Activated T-helper 1 cell treated with anti-CD3 and anti-CD28 coated beads, Interleukin-12 subunit alpha, Interleukin-12 subunit beta, Interleukin-2, Interleukin-4 antibody, amounts not matched to agents 30 ng/mL and 10 ng/mL and 1 ng/mL, durations not matched to agents 14 hours and 24 hours and 36 hours (primary cell): ENCODE measurements at regions of chr3 and their contacts with region 1.

Region 1: DNA sequence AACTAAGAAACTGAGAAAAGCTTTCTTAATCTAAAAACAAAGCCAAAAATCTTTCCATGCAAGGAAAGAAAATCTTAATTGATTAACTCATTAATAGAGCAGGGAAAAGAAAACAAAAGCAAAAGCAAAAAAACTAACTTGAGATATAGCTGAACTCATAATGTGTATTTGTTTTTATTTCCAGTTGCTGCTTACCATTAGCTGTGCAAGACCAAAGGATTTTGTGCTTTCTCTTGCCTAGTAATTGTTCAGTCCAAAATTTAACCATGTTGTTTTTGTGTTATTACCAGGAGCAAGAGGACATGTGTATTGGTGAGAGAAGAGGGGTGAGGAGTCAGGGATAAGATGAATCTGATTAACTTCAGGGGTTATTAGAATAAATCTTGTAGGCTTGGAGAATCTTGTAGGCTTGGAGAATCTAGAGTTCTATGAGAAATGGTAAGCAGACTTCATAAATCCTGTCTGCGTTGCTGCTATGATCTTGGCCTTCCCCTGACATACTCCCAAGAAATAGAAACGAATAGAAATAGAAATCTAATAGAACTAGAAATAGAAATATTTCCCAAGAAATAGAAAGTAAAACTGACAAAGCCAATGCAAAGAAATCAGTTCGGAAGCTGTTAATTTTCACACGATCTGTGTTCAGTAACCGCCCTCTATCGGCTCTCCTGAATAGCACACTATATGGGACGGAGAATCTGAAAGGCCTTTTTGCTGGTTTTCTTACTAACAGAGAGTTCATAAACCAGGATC is 72.6 kb upstream of the TNFSF10 start:
- DNase-seq: peak; percentile 42
- H3K4me3 Mint-ChIP-seq: peak overlapping the region; percentile 84
- H3K27ac Mint-ChIP-seq: peak overlapping the region; percentile 88
- H3K4me1 Mint-ChIP-seq: peaks cover 69% of the 10 kb centered on the region
- H3K27me3 Mint-ChIP-seq: peaks cover 4% of the 10 kb centered on the region

Region 2: DNA sequence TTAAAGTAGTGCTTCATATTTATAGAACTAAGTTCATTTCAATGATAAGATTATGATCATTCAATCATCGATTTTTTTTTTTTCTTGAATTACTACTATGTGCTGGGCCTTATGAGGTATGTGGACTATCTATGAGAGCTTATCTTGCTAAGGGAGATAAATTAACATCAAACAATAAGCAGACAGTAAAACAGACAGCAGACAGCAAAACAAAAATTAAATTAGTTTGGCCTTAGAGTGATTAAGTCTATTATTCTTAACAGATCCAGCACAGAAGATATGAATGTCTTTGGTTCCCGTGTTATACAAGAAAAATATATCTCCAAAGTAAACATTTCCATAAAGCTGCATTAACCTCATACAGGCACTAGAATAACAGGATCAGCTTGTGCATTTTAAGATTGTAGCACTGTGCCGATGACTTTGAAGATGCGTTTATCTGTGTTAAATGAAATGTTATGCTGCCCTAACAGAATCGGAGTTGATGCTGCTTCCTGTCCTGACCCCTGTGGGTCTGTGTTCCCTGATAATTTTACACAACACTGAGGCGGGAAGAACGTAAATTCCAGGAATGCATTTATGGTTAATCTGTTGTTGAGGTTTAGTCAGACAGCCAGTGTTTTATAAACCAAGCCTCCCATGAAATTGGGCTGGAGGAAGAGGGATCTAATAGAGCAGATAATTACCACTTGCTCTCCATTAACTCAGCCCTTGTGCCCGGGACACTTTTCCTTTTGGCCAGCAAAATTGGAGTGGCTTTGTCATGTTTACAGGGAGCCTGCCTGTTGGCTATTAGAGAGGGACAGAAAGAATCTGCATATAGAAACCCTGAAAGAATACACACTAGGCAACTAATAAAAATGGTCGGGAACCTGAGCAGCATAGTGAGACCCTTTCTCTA is 228.4 kb before region 1 on chr3:
- intact Hi-C with region 1: no loop called
- DNase-seq: no peak
- H3K4me3 Mint-ChIP-seq: no peak overlapping the region
- H3K27ac Mint-ChIP-seq: no peak overlapping the region
- H3K4me1 Mint-ChIP-seq: no peaks in the 10 kb centered on the region
- H3K27me3 Mint-ChIP-seq: no peaks in the 10 kb centered on the region

Region 3: DNA sequence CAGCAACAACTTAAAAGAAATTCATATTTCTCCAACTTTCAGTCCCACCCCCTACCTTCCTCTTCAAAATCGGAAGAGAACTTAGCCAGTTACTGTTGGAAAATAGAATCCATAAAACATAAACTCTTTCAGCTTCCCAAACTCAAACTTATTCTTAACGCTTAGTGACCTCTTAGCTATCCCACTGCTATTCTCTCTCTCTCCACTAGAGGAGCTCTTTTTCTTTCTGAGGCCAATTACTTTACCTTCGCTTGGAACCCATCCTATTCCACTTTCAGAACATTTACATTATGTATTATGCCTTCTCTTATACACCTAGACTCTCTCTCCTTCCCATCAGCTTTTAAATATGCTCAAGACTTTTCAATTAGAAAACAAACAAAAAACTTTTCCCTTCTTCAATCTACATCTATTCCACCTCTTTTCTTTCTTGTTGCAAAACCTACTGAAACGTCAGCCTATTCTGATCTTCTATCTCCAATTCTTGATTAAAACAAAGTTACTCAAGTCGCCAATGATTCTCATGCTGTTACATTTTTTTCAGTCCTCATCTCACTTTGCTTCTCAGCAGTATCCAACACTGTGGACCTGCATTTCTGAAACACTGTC is 134.2 kb before region 1 on chr3:
- intact Hi-C with region 1: loop called (anchors 1 kb)
- DNase-seq: no peak
- H3K4me3 Mint-ChIP-seq: no peak overlapping the region
- H3K27ac Mint-ChIP-seq: no peak overlapping the region
- H3K4me1 Mint-ChIP-seq: no peaks in the 10 kb centered on the region
- H3K27me3 Mint-ChIP-seq: peaks cover 2% of the 10 kb centered on the region

Region 4: DNA sequence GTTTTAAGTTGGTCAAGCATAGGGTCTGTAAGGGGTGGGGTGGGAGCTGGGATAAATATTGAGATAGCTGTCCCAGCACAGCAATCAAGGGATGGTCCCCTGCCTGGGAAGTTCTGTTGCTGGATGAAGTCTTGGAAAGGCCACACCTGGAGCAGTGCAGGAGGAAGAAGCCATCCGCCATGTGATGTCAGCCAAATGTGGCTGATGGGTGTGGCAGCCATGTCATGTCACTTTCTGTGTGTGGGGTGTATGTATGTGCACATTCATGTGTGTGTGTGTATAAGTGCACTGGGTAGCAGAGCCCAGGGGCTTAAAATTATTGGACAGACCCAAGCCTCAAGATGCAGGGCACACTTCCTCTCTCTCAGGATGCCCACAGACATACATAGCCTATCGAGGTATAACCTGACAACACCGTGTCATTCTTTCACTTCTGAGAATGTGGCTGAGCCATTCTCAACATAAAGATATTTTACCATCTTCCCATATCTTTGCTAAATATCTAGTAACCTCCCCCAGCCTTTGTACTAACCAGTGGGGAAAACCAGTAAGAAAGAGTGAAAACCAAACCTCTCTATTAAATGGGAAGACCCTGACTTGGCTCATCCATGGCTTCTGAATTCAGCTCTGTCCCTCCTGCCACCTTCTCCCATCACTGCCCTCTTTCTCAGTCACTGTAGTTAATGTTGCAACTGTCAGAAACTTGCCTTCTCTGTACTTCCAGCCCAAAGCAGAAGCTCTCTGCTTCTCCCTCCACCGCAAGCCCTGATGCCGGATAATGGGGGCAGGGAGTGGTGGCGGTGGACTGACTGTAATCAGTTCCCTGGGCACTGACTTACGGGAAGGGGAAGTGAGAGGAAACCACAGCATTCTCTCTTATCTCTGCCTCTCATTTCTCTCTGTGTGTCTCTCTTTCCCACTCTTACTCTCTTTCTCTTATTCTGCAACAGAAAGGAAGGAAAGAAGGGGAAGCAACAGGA is 83.7 kb before region 1 on chr3:
- intact Hi-C with region 1: loop called (anchors 1 kb)
- DNase-seq: peak; percentile 69
- H3K4me3 Mint-ChIP-seq: peak overlapping the region; percentile 43
- H3K27ac Mint-ChIP-seq: peak overlapping the region; percentile 88
- H3K4me1 Mint-ChIP-seq: peaks cover 98% of the 10 kb centered on the region
- H3K27me3 Mint-ChIP-seq: no peaks in the 10 kb centered on the region

Region 5: GRCh38 chr3:172530566-172530965 is 65.3 kb before region 1 on chr3:
- intact Hi-C with region 1: loop called (anchors 1 kb)
- DNase-seq: no peak
- H3K4me3 Mint-ChIP-seq: peak overlapping the region; percentile 50
- H3K27ac Mint-ChIP-seq: peak overlapping the region; percentile 93
- H3K4me1 Mint-ChIP-seq: peaks cover 68% of the 10 kb centered on the region
- H3K27me3 Mint-ChIP-seq: no peaks in the 10 kb centered on the region

Region 6: DNA sequence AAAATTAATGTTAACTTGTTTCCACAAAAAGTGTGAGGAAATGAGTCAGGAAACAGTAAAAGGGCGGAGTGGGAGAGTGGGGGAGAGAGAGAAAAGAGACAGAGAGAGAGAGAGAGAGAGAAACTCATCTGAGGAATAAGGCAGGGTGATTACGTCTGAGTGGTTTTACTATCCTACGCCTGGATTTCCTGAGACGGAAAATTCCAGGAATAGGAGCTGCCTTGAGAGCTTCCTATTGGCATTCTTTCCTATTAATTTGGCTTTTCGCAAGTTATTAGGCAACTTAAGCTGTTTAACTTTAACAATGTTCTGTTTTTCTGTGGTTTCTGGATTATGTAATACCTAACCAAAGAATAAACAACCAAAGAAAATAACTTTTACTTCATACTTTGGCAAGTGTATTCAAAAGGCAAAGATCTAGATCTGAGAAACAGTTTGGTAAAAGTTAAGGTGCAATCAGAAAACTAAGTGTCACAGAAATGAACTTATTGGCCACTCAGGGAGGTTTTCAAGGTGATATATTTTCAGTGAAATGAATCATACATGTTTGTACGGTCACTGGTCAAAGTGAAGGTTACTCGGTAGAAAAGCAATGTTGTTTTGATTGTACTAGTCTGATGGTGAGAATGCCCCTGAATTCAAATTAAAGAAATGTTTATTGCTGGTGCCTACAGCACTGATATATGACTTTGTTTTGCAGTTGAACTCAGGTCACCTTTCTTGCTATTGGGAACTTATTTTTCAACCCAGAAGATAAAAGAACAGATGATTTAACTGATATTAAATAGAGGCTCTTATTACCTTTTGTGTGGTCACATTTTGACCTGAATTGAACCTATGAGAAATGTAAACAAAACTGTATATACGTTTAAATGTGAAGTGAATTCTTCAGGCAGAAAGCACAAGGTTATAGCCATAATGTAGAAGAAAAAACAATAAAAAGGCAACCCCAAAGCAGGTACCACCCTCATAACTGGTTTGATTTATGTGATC is 32.6 kb before region 1 on chr3:
- intact Hi-C with region 1: loop called (anchors 1 kb)
- DNase-seq: peak; percentile 19
- H3K4me3 Mint-ChIP-seq: peak overlapping the region; percentile 74
- H3K27ac Mint-ChIP-seq: peak overlapping the region; percentile 94
- H3K4me1 Mint-ChIP-seq: peaks cover 65% of the 10 kb centered on the region
- H3K27me3 Mint-ChIP-seq: no peaks in the 10 kb centered on the region

Region 7: GRCh38 chr3:172616031-172616461 is 20.2 kb after region 1 on chr3:
- intact Hi-C with region 1: loop called (anchors 1 kb)
- DNase-seq: no peak
- H3K4me3 Mint-ChIP-seq: peak overlapping the region; percentile 49
- H3K27ac Mint-ChIP-seq: peak overlapping the region; percentile 90
- H3K4me1 Mint-ChIP-seq: peaks cover 31% of the 10 kb centered on the region
- H3K27me3 Mint-ChIP-seq: no peaks in the 10 kb centered on the region

Region 8: DNA sequence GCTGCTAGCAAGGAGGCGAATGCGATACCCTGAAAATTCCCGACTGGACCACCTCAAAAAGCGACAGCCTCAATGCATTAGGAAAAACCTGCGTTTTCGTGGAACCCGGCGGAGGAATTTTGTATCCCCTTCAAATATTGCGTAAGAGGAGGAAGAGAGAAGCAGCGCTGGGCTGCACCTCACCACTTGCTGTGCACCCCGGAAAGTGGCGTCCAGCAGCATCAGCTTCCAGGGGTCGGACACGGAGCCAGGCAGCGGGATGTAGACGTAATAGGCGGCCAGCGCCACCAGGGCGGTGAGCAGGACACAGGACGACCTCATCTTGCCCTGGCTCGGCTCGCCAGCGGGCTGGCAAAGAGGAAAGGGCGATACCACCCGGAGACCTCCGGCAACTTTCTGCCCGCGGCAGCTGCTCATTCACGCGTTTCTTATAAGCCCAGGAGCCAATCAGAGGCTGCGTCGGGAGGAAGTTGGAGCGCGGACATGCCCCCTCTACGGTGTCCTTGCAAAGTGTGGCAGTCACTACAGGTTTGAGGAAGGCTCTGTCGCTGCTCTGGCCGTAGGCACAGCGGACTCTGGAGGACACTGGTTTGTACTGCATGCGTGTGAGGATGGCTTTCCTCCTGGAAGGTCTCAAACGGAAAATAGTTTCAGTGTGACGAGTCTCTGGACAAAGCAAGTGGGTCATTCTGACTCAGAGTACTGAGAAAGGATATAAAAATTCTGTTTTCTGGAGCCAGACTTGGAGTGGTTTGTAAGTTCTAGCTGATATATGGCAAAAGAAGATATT is 115.0 kb after region 1 on chr3 and contains the start of gene NCEH1:
- intact Hi-C with region 1: loop called (anchors 2 kb)
- DNase-seq: peak; percentile 69
- H3K4me3 Mint-ChIP-seq: peak within 1 kb of the TSS; percentile 91
- H3K27ac Mint-ChIP-seq: no peak within 1 kb of the TSS
- H3K4me1 Mint-ChIP-seq: peaks cover 20% of the 10 kb centered on the region
- H3K27me3 Mint-ChIP-seq: peaks cover 14% of the 10 kb centered on the region
- total RNA-seq, gene NCEH1: 7.4 and 8.8 TPM in 2 replicates